Activated CD4-positive, alpha-beta memory T cell treated with anti-CD3 and anti-CD28 coated beads for 36 hours (primary cell): ENCODE measurements at regions of chr7 and their contacts with region 1.

Region 1: GRCh38 chr7:44885394-44886317 is at the start of gene PURB:
- DNase-seq: peak; percentile 98
- H3K4me3 Mint-ChIP-seq: peak within 1 kb of the TSS; percentile 91
- H3K27ac Mint-ChIP-seq: peak within 1 kb of the TSS; percentile 98
- H3K4me1 Mint-ChIP-seq: peaks cover 58% of the 10 kb centered on the region
- H3K27me3 Mint-ChIP-seq: no peaks in the 10 kb centered on the region
- total RNA-seq, gene PURB: 21.5 to 23.6 TPM

Region 2: GRCh38 chr7:44498230-44498954 is 387.3 kb before region 1 on chr7:
- CTCF ChIA-PET with region 1: no interaction called
- POLR2A ChIA-PET with region 1: no interaction called
- intact Hi-C with region 1: no loop called
- DNase-seq: no peak
- H3K4me3 Mint-ChIP-seq: no peak overlapping the region
- H3K27ac Mint-ChIP-seq: no peak overlapping the region
- H3K4me1 Mint-ChIP-seq: no peaks in the 10 kb centered on the region
- H3K27me3 Mint-ChIP-seq: peaks cover under 1% of the 10 kb centered on the region

Region 3: DNA sequence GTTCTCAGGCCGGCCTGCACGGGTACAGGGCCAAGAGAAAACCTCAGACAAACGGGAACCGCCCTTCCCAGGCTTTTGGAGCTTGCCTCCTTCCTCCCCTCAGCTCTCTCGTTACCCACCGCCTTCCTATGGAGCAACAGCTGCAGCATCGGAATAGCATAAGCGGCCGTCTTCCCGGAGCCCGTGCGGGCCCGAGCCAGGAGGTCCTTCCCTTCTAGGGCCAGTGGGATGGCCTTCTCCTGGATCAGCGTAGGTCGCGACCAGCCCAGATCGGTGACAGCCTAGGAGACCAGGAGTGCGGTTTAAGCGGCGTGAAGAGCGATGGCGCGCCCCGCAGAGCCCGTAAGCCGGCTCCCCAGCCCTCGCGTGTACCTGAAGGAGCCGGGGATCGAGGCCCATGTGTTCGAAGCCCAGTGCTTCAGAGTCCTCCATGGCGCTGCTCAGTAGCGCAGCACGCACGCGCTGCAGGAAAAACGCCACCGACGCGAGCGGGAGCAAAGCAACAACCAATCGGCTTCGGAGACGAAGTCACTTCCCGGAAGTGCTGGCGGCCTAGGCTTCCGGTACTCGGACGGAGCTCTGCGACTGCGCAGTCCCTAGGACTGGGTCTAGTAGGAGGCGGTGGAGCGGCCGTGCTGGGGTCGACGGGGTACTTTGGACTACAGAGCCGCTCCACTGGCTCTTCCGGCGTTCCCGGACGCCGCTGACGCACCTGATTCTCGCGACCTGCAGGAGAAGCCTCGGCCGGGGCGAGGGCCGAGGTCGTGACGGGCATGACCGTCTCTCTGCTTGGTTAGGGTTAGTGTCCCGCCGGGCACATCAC is 312.0 kb before region 1 on chr7 and contains the start of gene DDX56:
- CTCF ChIA-PET with region 1: interaction called, 3 read pairs
- POLR2A ChIA-PET with region 1: no interaction called
- intact Hi-C with region 1: loop called (anchors 1 kb)
- DNase-seq: peak; percentile 97
- H3K4me3 Mint-ChIP-seq: peak within 1 kb of the TSS; percentile 92
- H3K27ac Mint-ChIP-seq: peak within 1 kb of the TSS; percentile 91
- H3K4me1 Mint-ChIP-seq: peaks cover 43% of the 10 kb centered on the region
- H3K27me3 Mint-ChIP-seq: no peaks in the 10 kb centered on the region
- total RNA-seq, gene DDX56: 84.0 to 87.0 TPM

Region 4: DNA sequence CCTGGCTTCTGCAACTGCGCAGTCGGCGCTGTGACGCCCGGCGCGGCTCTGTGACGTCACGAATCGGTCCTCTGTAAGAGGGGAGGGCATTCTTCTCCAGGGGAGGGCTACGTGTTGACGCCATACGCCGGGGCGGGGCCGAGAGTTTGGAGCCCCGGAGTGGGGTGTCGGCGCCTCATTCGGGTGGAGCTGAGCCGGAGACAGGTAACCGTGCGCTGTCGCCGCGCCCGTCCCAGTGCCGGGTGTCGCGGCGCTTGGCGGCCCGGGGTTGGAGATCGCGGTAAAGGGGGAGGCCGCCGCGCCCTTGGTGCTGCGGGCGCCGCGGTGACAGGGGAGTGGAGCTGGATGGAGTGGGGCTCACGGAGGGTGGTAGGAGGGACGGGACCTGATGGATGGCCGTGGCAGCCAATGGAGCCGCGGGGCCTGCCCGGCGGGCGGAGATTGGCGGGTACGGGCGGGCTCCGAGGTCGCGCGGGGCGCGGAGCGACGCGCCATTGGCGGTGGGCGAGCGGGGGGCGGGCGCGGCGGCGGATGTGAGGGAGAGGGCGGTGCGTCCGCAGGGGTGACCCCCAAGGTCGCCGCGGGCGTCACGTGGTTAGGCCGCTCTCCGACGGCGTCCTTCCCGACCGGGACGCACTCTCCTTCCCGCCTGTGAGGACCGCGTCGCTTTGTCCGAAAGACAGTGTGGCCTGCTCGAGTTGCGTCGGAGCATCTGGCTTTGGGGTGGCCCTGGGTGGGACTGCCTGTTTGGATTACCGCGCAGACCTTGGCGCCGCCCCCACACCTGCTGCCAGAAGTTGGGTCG is 279.0 kb before region 1 on chr7 and contains the start of gene OGDH:
- CTCF ChIA-PET with region 1: no interaction called
- POLR2A ChIA-PET with region 1: interaction called, 9 read pairs
- intact Hi-C with region 1: loop called (anchors 1 kb)
- DNase-seq: peak; percentile 100
- H3K4me3 Mint-ChIP-seq: peak within 1 kb of the TSS; percentile 82
- H3K27ac Mint-ChIP-seq: peak within 1 kb of the TSS; percentile 98
- H3K4me1 Mint-ChIP-seq: peaks cover 36% of the 10 kb centered on the region
- H3K27me3 Mint-ChIP-seq: no peaks in the 10 kb centered on the region
- total RNA-seq, gene OGDH: 103 to 105 TPM

Region 5: GRCh38 chr7:44858161-44858560 is 27.5 kb before region 1 on chr7:
- CTCF ChIA-PET with region 1: interaction called, 40 read pairs
- POLR2A ChIA-PET with region 1: interaction called, 6 read pairs
- intact Hi-C with region 1: loop called (anchors 1 kb)
- DNase-seq: no peak
- H3K4me3 Mint-ChIP-seq: no peak overlapping the region
- H3K27ac Mint-ChIP-seq: no peak overlapping the region
- H3K4me1 Mint-ChIP-seq: peaks cover 14% of the 10 kb centered on the region
- H3K27me3 Mint-ChIP-seq: no peaks in the 10 kb centered on the region

Region 6: GRCh38 chr7:44914992-44915607 is 29.4 kb after region 1 on chr7:
- CTCF ChIA-PET with region 1: interaction called, 5 read pairs
- POLR2A ChIA-PET with region 1: interaction called, 13 read pairs
- intact Hi-C with region 1: loop called (anchors 1 kb)
- DNase-seq: peak; percentile 88
- H3K4me3 Mint-ChIP-seq: no peak overlapping the region
- H3K27ac Mint-ChIP-seq: peak overlapping the region; percentile 76
- H3K4me1 Mint-ChIP-seq: peaks cover 20% of the 10 kb centered on the region
- H3K27me3 Mint-ChIP-seq: no peaks in the 10 kb centered on the region

Region 7: GRCh38 chr7:44936322-44936721 is 50.7 kb after region 1 on chr7:
- CTCF ChIA-PET with region 1: no interaction called
- POLR2A ChIA-PET with region 1: no interaction called
- intact Hi-C with region 1: no loop called
- DNase-seq: no peak
- H3K4me3 Mint-ChIP-seq: no peak overlapping the region
- H3K27ac Mint-ChIP-seq: no peak overlapping the region
- H3K4me1 Mint-ChIP-seq: no peaks in the 10 kb centered on the region
- H3K27me3 Mint-ChIP-seq: peaks cover 5% of the 10 kb centered on the region

Region 8: GRCh38 chr7:44980393-44981034 is 94.9 kb after region 1 on chr7:
- CTCF ChIA-PET with region 1: no interaction called
- POLR2A ChIA-PET with region 1: interaction called, 12 read pairs
- intact Hi-C with region 1: loop called (anchors 1 kb)
- DNase-seq: peak; percentile 94
- H3K4me3 Mint-ChIP-seq: peak overlapping the region; percentile 97
- H3K27ac Mint-ChIP-seq: peak overlapping the region; percentile 100
- H3K4me1 Mint-ChIP-seq: peaks cover 67% of the 10 kb centered on the region
- H3K27me3 Mint-ChIP-seq: no peaks in the 10 kb centered on the region

Region 9: GRCh38 chr7:45111298-45112223 is 225.9 kb after region 1 on chr7 and contains the start of gene TBRG4:
- CTCF ChIA-PET with region 1: no interaction called
- POLR2A ChIA-PET with region 1: interaction called, 4 read pairs
- intact Hi-C with region 1: loop called (anchors 2 kb)
- DNase-seq: peak; percentile 96
- H3K4me3 Mint-ChIP-seq: peak within 1 kb of the TSS; percentile 96
- H3K27ac Mint-ChIP-seq: peak within 1 kb of the TSS; percentile 94
- H3K4me1 Mint-ChIP-seq: peaks cover 40% of the 10 kb centered on the region
- H3K27me3 Mint-ChIP-seq: no peaks in the 10 kb centered on the region
- total RNA-seq, gene TBRG4: 135 to 137 TPM

Region 10: DNA sequence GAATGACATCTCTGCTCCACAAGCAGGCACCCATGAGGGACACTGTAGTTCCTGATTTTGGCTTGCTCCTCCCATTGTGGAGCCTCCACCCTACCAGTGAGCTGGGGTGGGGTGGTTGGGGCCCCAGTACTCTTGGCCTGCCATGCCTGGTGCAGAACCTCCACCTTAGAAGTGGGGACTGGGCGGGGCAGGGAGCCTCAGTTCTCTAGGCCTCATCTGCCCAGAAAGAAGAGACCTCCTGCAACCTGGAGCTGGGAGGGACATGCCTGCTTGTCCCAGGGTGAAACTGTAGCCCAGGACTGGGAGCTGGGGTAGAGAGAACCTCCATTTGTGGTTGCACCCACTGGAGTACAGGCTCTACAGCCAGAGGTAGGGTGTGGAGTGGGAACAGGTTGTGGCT is 286.3 kb after region 1 on chr7:
- CTCF ChIA-PET with region 1: no interaction called
- POLR2A ChIA-PET with region 1: no interaction called
- intact Hi-C with region 1: no loop called
- DNase-seq: no peak
- H3K4me3 Mint-ChIP-seq: no peak overlapping the region
- H3K27ac Mint-ChIP-seq: no peak overlapping the region
- H3K4me1 Mint-ChIP-seq: no peaks in the 10 kb centered on the region
- H3K27me3 Mint-ChIP-seq: peaks cover 2% of the 10 kb centered on the region